Activated T-helper 1 cell treated with anti-CD3 and anti-CD28 coated beads, Interleukin-12 subunit alpha, Interleukin-12 subunit beta, Interleukin-2, Interleukin-4 antibody, amounts not matched to agents 30 ng/mL and 10 ng/mL and 1 ng/mL, durations not matched to agents 14 hours and 24 hours and 36 hours (primary cell): ENCODE measurements at regions of chrX and their contacts with region 1.

Region 1: DNA sequence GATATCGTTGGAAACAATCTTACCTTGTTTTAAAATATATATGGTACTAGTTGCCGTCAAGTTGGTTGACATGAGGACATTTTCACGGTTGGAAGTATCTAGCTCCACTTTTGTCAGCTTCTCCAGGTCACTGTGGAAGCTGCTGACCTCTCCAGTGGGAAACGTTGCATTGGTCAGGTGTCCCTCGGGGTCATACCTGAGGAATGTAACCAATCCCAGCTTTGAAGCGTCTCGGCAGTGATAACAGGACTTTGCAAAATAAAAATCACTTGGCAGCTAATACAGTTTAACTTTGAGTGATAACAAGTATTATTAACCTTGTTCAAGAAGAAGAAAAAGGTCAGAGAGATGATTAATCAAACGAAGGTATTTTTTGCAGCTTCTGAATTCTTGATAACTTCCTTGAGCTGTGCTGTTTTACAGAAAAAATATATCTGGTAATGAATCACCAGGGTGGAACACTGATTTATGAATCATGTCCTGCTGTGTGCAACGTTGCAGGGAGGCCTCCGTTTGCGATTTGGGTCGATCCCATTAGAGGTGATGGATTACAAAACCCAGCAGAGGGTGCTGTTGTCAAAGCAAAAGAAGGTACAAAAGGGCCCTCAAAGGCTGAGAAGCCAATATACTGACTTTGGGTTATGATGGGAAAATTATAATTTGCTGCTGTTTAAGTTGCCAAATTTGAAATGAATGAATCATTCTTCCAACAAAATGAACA is 60.1 kb downstream of the SH2D1A start:
- DNase-seq: peak; percentile 27
- H3K4me3 Mint-ChIP-seq: no peak overlapping the region
- H3K27ac Mint-ChIP-seq: no peak overlapping the region
- H3K4me1 Mint-ChIP-seq: peaks cover 9% of the 10 kb centered on the region
- H3K27me3 Mint-ChIP-seq: no peaks in the 10 kb centered on the region

Region 2: DNA sequence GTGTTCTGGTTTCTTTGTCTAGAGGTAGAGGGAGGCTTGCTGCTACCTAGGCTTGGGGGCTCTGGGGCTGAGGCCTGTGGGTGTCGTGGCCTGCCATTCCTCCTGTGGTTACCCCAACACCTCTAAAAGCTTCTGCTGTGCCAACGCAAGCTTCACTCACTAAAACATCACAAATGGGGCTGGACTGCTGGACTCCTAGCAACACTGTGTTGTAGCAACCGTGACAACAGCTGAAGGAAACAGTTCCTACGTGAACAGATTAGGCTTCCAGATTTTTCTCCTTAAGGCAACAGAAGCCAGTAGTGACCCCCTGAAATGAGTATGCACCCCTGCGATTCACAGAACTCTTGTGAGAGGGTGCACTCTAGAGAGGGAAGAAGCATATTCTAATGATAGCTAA is 212.3 kb before region 1 on chrX:
- intact Hi-C with region 1: no loop called
- DNase-seq: no peak
- H3K4me3 Mint-ChIP-seq: no peak overlapping the region
- H3K27ac Mint-ChIP-seq: no peak overlapping the region
- H3K4me1 Mint-ChIP-seq: no peaks in the 10 kb centered on the region
- H3K27me3 Mint-ChIP-seq: peaks cover 3% of the 10 kb centered on the region

Region 3: GRCh38 chrX:124211312-124211942 is 195.0 kb before region 1 on chrX:
- intact Hi-C with region 1: loop called (anchors 1 kb)
- DNase-seq: peak; percentile 3
- H3K4me3 Mint-ChIP-seq: no peak overlapping the region
- H3K27ac Mint-ChIP-seq: no peak overlapping the region
- H3K4me1 Mint-ChIP-seq: peaks cover 44% of the 10 kb centered on the region
- H3K27me3 Mint-ChIP-seq: peaks cover 5% of the 10 kb centered on the region

Region 4: GRCh38 chrX:124388562-124388961 is 17.9 kb before region 1 on chrX:
- intact Hi-C with region 1: loop called (anchors 1 kb)
- DNase-seq: peak; percentile 23
- H3K4me3 Mint-ChIP-seq: no peak overlapping the region
- H3K27ac Mint-ChIP-seq: no peak overlapping the region
- H3K4me1 Mint-ChIP-seq: peaks cover 5% of the 10 kb centered on the region
- H3K27me3 Mint-ChIP-seq: no peaks in the 10 kb centered on the region

Region 5: GRCh38 chrX:124395145-124395880 is 11.1 kb before region 1 on chrX:
- intact Hi-C with region 1: loop called (anchors 1 kb)
- DNase-seq: no peak
- H3K4me3 Mint-ChIP-seq: no peak overlapping the region
- H3K27ac Mint-ChIP-seq: no peak overlapping the region
- H3K4me1 Mint-ChIP-seq: peaks cover 21% of the 10 kb centered on the region
- H3K27me3 Mint-ChIP-seq: no peaks in the 10 kb centered on the region

Region 6: GRCh38 chrX:124529786-124530185 is 123.3 kb after region 1 on chrX:
- intact Hi-C with region 1: loop called (anchors 10 kb)
- DNase-seq: no peak
- H3K4me3 Mint-ChIP-seq: no peak overlapping the region
- H3K27ac Mint-ChIP-seq: no peak overlapping the region
- H3K4me1 Mint-ChIP-seq: no peaks in the 10 kb centered on the region
- H3K27me3 Mint-ChIP-seq: no peaks in the 10 kb centered on the region

Region 7: DNA sequence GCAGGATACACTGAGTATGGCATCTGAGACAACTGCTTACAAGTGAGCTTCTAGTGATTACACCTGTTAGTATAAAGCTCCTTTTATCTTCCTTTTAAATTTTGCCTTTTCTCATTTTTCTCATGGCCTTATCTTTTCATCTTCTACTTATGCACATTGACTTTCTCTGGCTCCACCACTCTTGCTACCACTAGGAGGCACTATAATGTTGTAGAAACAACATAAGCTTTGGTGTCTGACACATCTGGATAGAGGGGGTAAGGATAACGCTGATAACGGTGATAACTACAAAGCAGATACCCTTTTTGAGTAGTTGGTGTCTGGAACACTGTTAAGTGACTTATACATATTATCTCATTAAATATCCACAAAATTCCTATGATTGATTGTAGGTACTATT is 725.8 kb after region 1 on chrX:
- intact Hi-C with region 1: loop called (anchors 1 kb)
- DNase-seq: no peak
- H3K4me3 Mint-ChIP-seq: no peak overlapping the region
- H3K27ac Mint-ChIP-seq: no peak overlapping the region
- H3K4me1 Mint-ChIP-seq: no peaks in the 10 kb centered on the region
- H3K27me3 Mint-ChIP-seq: no peaks in the 10 kb centered on the region